OCI-LY7 (cell line): ENCODE measurements at regions of chr2 and their contacts with region 1.

Region 1: GRCh38 chr2:203238704-203239526 is at the start of gene CYP20A1:
- DNase-seq: peak; percentile 96
- H3K4me3 ChIP-seq: peak within 1 kb of the TSS; percentile 75
- H3K27ac ChIP-seq: peak within 1 kb of the TSS; percentile 86
- H3K4me1 ChIP-seq: peaks cover 14% of the 10 kb centered on the region
- CTCF ChIP-seq: peak; percentile 52
- total RNA-seq, gene CYP20A1: 14.7 and 15.5 TPM in 2 replicates

Region 2: GRCh38 chr2:202911512-202912341 is 327.2 kb before region 1 on chr2 and contains the starts of genes CARF and WDR12:
- CTCF ChIA-PET with region 1: no interaction called
- POLR2A ChIA-PET with region 1: interaction called, 6 read pairs
- intact Hi-C with region 1: loop called (anchors 1 kb)
- DNase-seq: peak; percentile 94
- H3K4me3 ChIP-seq: peak within 1 kb of the TSS; percentile 88
- H3K27ac ChIP-seq: peak within 1 kb of the TSS; percentile 82
- H3K4me1 ChIP-seq: peaks cover 20% of the 10 kb centered on the region
- CTCF ChIP-seq: no peak
- total RNA-seq, gene CARF: 12.5 and 14.7 TPM in 2 replicates
- total RNA-seq, gene WDR12: 38.4 and 54.1 TPM in 2 replicates

Region 3: DNA sequence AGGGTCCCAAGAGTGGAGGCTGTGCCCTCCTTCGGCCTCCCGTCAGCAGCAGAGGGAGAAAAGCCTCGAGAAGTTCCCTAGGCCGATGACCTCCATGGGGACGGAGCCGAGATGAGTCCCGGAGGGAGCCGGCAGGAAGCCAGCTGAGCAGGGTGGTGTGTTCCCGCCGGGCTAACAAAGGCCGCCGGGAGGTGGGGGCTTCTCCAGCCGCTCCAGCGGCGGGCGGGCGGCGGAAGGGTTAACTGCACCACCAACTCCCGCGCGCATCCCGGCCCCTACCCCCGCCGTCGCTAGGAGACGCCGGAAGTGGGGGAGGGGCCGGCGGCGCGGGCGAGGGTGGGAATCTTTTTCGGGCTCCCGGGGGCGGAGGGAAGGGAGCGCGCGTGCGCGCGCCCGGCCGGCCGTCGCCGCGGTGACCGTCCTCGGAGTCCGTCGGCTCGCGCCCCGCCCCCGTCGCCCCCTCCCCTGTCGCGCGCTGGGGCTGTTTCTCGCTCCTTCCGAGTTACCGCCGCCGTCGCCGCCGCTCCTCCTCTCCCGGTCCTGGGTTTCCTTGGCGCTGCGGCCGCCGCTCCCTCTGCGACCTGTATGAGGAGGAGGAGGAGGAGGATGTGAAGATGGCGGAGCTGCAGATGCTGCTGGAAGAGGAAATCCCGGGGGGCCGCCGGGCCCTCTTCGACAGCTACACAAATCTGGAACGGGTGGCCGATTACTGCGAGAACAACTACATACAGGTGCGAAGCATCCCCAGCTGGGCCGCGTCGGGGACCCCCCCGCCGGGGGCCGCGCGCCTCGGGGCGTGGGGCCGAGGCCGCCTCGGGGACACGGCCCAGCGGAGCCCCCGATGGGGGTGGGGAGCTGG is 89.2 kb after region 1 on chr2 and contains the start of gene ABI2:
- CTCF ChIA-PET with region 1: no interaction called
- POLR2A ChIA-PET with region 1: interaction called, 3 read pairs
- intact Hi-C with region 1: loop called (anchors 1 kb)
- DNase-seq: peak; percentile 78
- H3K4me3 ChIP-seq: peak within 1 kb of the TSS; percentile 83
- H3K27ac ChIP-seq: peak within 1 kb of the TSS; percentile 52
- H3K4me1 ChIP-seq: peaks cover 30% of the 10 kb centered on the region
- CTCF ChIP-seq: no peak
- total RNA-seq, gene ABI2: 24.0 and 37.9 TPM in 2 replicates

Region 4: DNA sequence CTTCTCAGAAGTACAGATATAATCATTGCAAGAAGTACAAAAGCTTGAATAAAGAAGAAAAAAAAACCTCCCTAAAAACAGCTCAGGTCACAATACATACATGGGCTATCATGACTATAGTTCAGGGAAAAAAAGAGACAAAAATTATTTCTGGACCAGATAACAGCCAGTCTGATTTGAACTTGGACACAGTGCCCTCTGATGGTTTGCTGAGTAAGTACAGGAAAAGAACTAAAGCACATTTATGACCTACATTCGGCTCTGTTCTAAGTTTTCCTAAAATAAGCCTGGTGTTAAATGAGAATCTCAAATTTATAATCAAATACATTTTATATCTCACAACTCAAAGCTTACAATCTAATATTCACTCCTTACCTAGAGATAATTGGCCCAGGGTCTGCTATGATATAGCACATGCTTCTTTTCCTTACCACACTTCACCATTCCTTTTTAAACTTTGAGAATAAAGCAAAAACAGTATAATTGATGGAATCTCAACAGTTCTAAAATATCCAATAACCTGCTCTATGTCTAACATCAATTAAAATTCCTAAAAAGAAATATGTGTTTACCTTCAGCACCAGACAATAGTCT is 215.0 kb after region 1 on chr2:
- CTCF ChIA-PET with region 1: no interaction called
- POLR2A ChIA-PET with region 1: interaction called, 5 read pairs
- intact Hi-C with region 1: loop called (anchors 5 kb)
- DNase-seq: peak; percentile 71
- H3K4me3 ChIP-seq: no peak overlapping the region
- H3K27ac ChIP-seq: no peak overlapping the region
- H3K4me1 ChIP-seq: peaks cover 9% of the 10 kb centered on the region
- CTCF ChIP-seq: peak; percentile 96

Region 5: DNA sequence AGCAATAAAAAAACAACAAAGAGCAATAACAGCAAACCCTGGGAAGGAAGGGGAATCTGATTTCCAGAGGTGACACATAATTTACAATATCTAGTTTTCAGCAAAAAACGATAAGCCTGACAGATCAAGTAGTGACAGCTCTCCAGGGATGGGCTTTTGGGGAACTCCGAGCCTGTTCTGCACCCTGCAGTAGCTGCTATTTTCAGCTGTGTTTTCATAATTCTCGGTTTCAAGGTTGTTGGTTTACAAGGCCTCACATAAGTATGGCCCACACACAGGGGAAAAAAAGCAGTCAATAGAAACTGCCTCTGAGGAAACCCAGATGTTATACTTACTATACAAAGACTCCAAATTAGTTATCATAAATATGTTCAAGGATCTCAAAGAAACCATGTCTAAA is 561.0 kb after region 1 on chr2:
- CTCF ChIA-PET with region 1: no interaction called
- POLR2A ChIA-PET with region 1: no interaction called
- intact Hi-C with region 1: loop called (anchors 5 kb)
- DNase-seq: peak; percentile 69
- H3K4me3 ChIP-seq: peak overlapping the region; percentile 1
- H3K27ac ChIP-seq: no peak overlapping the region
- H3K4me1 ChIP-seq: peaks cover 48% of the 10 kb centered on the region
- CTCF ChIP-seq: no peak

Region 6: GRCh38 chr2:205017381-205017780 is 1778.5 kb after region 1 on chr2:
- CTCF ChIA-PET with region 1: no interaction called
- POLR2A ChIA-PET with region 1: no interaction called
- intact Hi-C with region 1: no loop called
- DNase-seq: no peak
- H3K4me3 ChIP-seq: no peak overlapping the region
- H3K27ac ChIP-seq: no peak overlapping the region
- H3K4me1 ChIP-seq: no peaks in the 10 kb centered on the region
- CTCF ChIP-seq: no peak